IMR-90 (cell line): ENCODE measurements at regions of chr11 and their contacts with region 1.

Region 1: DNA sequence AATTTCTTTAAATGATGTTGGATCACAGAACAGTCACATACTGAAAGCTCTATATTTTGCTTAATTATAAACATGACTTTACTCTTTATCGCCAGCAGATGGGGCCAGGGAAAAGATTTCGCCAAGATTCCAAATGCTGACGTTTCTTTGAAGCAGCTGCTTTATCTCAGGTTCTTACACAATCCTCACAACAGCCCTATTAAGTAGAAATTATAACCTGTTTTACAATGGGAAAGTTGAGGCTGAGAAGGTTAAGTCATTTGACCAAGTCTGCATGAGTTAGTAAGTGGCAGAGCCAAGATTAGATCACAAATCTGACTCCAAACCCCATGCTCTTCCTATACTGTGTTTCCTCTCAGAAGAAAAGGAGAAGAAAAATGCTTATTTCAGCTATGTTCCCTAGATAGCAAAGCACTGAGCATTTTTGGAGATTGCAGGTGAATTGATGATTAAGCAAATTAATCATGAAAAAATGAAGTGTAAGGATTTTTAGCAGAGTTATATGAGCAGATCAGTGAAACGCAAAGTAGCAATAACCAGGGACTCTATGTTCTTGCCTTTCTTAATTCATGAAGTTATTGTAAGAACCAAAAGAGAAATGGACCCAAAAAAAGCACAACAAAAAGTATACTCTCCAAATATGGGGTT is 79.0 kb downstream of the AASDHPPT start:
- DNase-seq: peak; percentile 83
- ATAC-seq: peak; percentile 84
- H3K4me3 ChIP-seq: no peak overlapping the region
- H3K27ac ChIP-seq: no peak overlapping the region
- H3K4me1 ChIP-seq: peaks cover 4% of the 10 kb centered on the region; the same call in 1 of the 2 replicates
- H3K27me3 ChIP-seq: no peaks in the 10 kb centered on the region
- CTCF ChIP-seq: peak; percentile 65
- POLR2A ChIP-seq: no peak
- RAD21 ChIP-seq: peak; percentile 67

Region 2: GRCh38 chr11:106306942-106307341 is 150.5 kb after region 1 on chr11:
- CTCF ChIA-PET with region 1: interaction called, 4 read pairs
- POLR2A ChIA-PET with region 1: no interaction called
- dilution Hi-C with region 1: no loop called
- in situ Hi-C with region 1: no loop called
- intact Hi-C with region 1: loop called (anchors 5 kb)
- DNase-seq: no peak
- ATAC-seq: no peak
- H3K4me3 ChIP-seq: no peak overlapping the region
- H3K27ac ChIP-seq: no peak overlapping the region
- H3K4me1 ChIP-seq: no peaks in the 10 kb centered on the region
- H3K27me3 ChIP-seq: no peaks in the 10 kb centered on the region
- CTCF ChIP-seq: peak; percentile 20; the same call in 1 of the 2 replicates
- POLR2A ChIP-seq: no peak
- RAD21 ChIP-seq: peak; percentile 34

Region 3: GRCh38 chr11:106399076-106399511 is 242.7 kb after region 1 on chr11:
- CTCF ChIA-PET with region 1: no interaction called
- POLR2A ChIA-PET with region 1: no interaction called
- dilution Hi-C with region 1: no loop called
- in situ Hi-C with region 1: no loop called
- intact Hi-C with region 1: loop called (anchors 5 kb)
- DNase-seq: peak; percentile 100
- ATAC-seq: peak; percentile 96
- H3K4me3 ChIP-seq: no peak overlapping the region
- H3K27ac ChIP-seq: peak overlapping the region; percentile 90
- H3K4me1 ChIP-seq: peaks cover 15% of the 10 kb centered on the region
- H3K27me3 ChIP-seq: no peaks in the 10 kb centered on the region
- CTCF ChIP-seq: no peak
- POLR2A ChIP-seq: 0 out of 2 replicates have a peak, but pooled peaks have one; percentile 17
- RAD21 ChIP-seq: no peak; the same call in 1 of the 2 replicates

Region 4: DNA sequence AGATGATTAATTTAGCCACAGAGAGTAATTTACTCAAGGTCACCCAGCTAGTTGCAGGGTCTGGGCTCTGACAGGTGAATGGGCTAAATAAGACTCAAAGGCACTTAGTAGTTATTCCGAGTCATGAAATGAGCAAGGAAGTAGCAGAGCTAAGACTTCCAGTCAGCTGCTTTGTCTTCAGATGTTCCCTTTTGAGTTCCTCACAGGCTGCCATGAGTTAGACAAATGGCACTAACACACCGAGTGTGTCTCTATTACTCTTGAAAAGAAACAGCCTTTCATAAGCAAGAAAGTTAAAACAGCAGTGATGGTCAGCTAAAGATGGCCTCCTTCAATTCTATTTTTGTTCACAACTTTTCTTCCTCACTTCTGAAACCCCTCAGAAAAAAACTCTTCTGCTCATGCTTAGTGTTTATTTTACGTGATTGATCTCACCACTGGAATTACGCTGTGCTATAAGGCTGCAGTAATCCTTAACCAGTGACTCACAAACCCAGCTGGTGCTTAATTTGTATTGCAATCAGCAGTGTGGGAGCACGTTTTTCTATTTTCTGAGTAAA is 310.2 kb after region 1 on chr11:
- CTCF ChIA-PET with region 1: no interaction called
- POLR2A ChIA-PET with region 1: no interaction called
- dilution Hi-C with region 1: no loop called
- in situ Hi-C with region 1: no loop called
- intact Hi-C with region 1: no loop called
- DNase-seq: peak; percentile 94
- ATAC-seq: peak; percentile 82
- H3K4me3 ChIP-seq: no peak overlapping the region; the same call in 1 of the 2 replicates
- H3K27ac ChIP-seq: peak overlapping the region; percentile 88
- H3K4me1 ChIP-seq: peaks cover 15% of the 10 kb centered on the region
- H3K27me3 ChIP-seq: no peaks in the 10 kb centered on the region
- CTCF ChIP-seq: no peak
- POLR2A ChIP-seq: no peak
- RAD21 ChIP-seq: no peak

Region 5: DNA sequence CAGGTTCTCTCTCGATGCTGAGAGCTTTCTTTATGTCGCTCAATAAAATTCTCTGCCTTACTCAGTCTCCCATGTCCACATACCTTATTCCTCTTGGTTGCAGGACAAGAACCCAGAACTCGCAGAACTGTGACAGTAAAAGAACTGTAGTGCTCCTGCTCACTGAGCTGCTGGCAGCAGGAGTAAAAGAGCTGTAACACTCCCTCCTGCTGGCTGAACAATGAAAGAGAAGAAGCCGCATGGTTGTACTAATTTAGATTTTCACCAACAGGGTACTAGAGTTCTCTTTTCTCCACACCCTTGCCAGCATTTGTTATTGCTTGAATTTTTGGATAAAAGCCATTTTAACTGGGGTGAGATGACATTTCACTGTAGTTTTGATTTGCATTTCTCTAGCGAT is 428.6 kb after region 1 on chr11:
- CTCF ChIA-PET with region 1: interaction called, 4 read pairs
- POLR2A ChIA-PET with region 1: no interaction called
- dilution Hi-C with region 1: no loop called
- in situ Hi-C with region 1: loop called (anchors 25 kb)
- intact Hi-C with region 1: loop called (anchors 1 kb)
- DNase-seq: peak; percentile 51
- ATAC-seq: peak; percentile 64
- H3K4me3 ChIP-seq: no peak overlapping the region
- H3K27ac ChIP-seq: no peak overlapping the region
- H3K4me1 ChIP-seq: no peaks in the 10 kb centered on the region
- H3K27me3 ChIP-seq: no peaks in the 10 kb centered on the region
- CTCF ChIP-seq: peak; percentile 70
- POLR2A ChIP-seq: no peak
- RAD21 ChIP-seq: peak; percentile 82

Region 6: GRCh38 chr11:106724293-106724892 is 568.0 kb after region 1 on chr11:
- CTCF ChIA-PET with region 1: no interaction called
- POLR2A ChIA-PET with region 1: no interaction called
- dilution Hi-C with region 1: no loop called
- in situ Hi-C with region 1: no loop called
- intact Hi-C with region 1: loop called (anchors 10 kb)
- DNase-seq: peak; percentile 6
- ATAC-seq: no peak
- H3K4me3 ChIP-seq: no peak overlapping the region
- H3K27ac ChIP-seq: no peak overlapping the region
- H3K4me1 ChIP-seq: no peaks in the 10 kb centered on the region
- H3K27me3 ChIP-seq: no peaks in the 10 kb centered on the region
- CTCF ChIP-seq: no peak
- POLR2A ChIP-seq: no peak
- RAD21 ChIP-seq: no peak

Region 7: DNA sequence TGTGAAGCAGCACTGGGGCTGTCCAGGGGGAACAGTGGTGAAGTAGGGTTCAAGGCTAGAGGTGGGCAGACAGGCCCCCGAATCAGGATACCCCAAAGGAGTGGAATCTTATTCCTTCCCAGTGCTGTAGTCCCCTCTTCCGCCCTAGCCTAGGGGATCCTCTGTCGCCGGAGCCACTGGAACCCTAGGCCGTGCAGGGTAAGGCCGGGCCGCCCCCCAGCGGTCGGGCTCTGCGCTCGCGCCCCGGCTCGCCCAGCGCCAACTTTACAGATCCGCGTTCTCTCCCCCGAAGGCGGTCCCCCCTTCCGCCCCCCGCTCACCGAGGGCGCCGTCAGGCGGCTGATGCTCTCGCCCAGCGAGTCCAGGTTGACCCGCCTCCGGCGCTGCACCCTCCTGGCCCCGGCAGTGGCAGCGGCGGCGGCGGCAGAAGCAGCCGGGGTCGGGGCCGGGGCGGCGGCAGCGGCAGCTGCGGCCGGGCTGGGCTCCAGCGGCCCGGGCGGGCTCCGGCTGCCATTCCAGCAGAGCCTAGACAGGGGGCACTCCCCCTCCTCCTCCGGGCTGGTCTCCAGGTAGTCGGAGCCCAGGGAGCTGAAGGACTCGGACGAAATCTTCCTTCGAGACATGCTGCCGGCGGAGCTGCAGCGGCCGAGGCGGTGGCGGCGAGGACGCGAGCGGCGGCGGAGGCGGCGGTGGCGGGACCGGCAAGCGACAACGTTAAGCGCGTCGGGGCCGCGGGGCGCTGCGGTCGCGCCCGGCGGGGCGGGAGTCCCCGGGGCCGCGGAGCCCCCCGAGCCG is 861.2 kb after region 1 on chr11:
- CTCF ChIA-PET with region 1: no interaction called
- POLR2A ChIA-PET with region 1: no interaction called
- dilution Hi-C with region 1: no loop called
- in situ Hi-C with region 1: no loop called
- intact Hi-C with region 1: loop called (anchors 5 kb)
- DNase-seq: no peak
- ATAC-seq: peak; percentile 79
- H3K4me3 ChIP-seq: peak overlapping the region; percentile 42
- H3K27ac ChIP-seq: no peak overlapping the region
- H3K4me1 ChIP-seq: no peaks in the 10 kb centered on the region
- H3K27me3 ChIP-seq: peaks cover 23% of the 10 kb centered on the region
- CTCF ChIP-seq: peak; percentile 37; the same call in 1 of the 2 replicates
- POLR2A ChIP-seq: no peak
- RAD21 ChIP-seq: peak; percentile 47